ENCODE measurements at regions of chr14 and their contacts with region 1.

Region 1: GRCh38 chr14:31543969-31544799 is 17.0 kb upstream of the NUBPL start:
- DNase-seq: peak; percentile 48
- ATAC-seq: peak; percentile 98
- H3K4me3 ChIP-seq: no peak overlapping the region
- H3K27ac ChIP-seq: no peak overlapping the region
- H3K4me1 ChIP-seq: no peaks in the 10 kb centered on the region
- H3K27me3 ChIP-seq: no peaks in the 10 kb centered on the region
- CTCF ChIP-seq: peak; percentile 61
- EP300 ChIP-seq: no peak
- POLR2A ChIP-seq: no peak
- RAD21 ChIP-seq: no peak

Region 2: GRCh38 chr14:31745741-31746140 is 201.6 kb after region 1 on chr14:
- CTCF ChIA-PET with region 1: no interaction called
- POLR2A ChIA-PET with region 1: no interaction called
- in situ Hi-C with region 1: no loop called
- intact Hi-C with region 1: loop called (anchors 5 kb)
- DNase-seq: peak; percentile 42
- ATAC-seq: no peak
- H3K4me3 ChIP-seq: no peak overlapping the region
- H3K27ac ChIP-seq: no peak overlapping the region
- H3K4me1 ChIP-seq: peaks cover 17% of the 10 kb centered on the region
- H3K27me3 ChIP-seq: no peaks in the 10 kb centered on the region
- CTCF ChIP-seq: peak; percentile 22; the same call in 1 of the 2 replicates
- EP300 ChIP-seq: no peak
- POLR2A ChIP-seq: no peak
- RAD21 ChIP-seq: no peak

Region 3: GRCh38 chr14:31787381-31787780 is 243.2 kb after region 1 on chr14:
- CTCF ChIA-PET with region 1: no interaction called
- POLR2A ChIA-PET with region 1: no interaction called
- in situ Hi-C with region 1: no loop called
- intact Hi-C with region 1: loop called (anchors 5 kb)
- DNase-seq: peak; percentile 72
- ATAC-seq: peak; percentile 93
- H3K4me3 ChIP-seq: no peak overlapping the region
- H3K27ac ChIP-seq: no peak overlapping the region
- H3K4me1 ChIP-seq: no peaks in the 10 kb centered on the region
- H3K27me3 ChIP-seq: no peaks in the 10 kb centered on the region
- CTCF ChIP-seq: peak; percentile 51
- EP300 ChIP-seq: no peak
- POLR2A ChIP-seq: no peak
- RAD21 ChIP-seq: no peak